HEK293 (cell line): ENCODE measurements at regions of chr12 and their contacts with region 1.

Region 1: GRCh38 chr12:12803186-12803585 is 10.0 kb upstream of the DDX47 start:
- H3K4me3 ChIP-seq: no peak overlapping the region
- H3K27ac ChIP-seq: no peak overlapping the region
- H3K4me1 ChIP-seq: peaks cover 8% of the 10 kb centered on the region
- CTCF ChIP-seq: no peak

Region 2: GRCh38 chr12:12813120-12814101 is 10.2 kb after region 1 on chr12 and contains the start of gene DDX47:
- CTCF ChIA-PET with region 1: interaction called, 10 read pairs
- POLR2A ChIA-PET with region 1: no interaction called
- H3K4me3 ChIP-seq: peak within 1 kb of the TSS; percentile 85
- H3K27ac ChIP-seq: peak within 1 kb of the TSS; percentile 59
- H3K4me1 ChIP-seq: peaks cover 6% of the 10 kb centered on the region
- CTCF ChIP-seq: peak; percentile 96